ENCODE measurements at regions of chr1 and their contacts with region 1.

Region 1: GRCh38 chr1:46223472-46223943 is 20.4 kb downstream of the LURAP1 start:
- DNase-seq: peak in 1 of 2 experiments; percentile 63
- H3K4me3 ChIP-seq: peak overlapping the region in 1 of 4 experiments; percentile 7; a peak in 1 of 8 replicates
- H3K27ac ChIP-seq: no peak overlapping the region
- H3K4me1 ChIP-seq: peaks cover 3 to 11% (median 7%) of the 10 kb centered on the region in 4 experiments; a peak in 6 of 7 replicates
- H3K27me3 ChIP-seq: no peaks in the 10 kb centered on the region
- CTCF ChIP-seq: peak; percentile 72 to 95 (median 76)
- EP300 ChIP-seq: no peak
- POLR2A ChIP-seq: no peak
- RAD21 ChIP-seq: peak; percentile 76 to 80

Region 2: DNA sequence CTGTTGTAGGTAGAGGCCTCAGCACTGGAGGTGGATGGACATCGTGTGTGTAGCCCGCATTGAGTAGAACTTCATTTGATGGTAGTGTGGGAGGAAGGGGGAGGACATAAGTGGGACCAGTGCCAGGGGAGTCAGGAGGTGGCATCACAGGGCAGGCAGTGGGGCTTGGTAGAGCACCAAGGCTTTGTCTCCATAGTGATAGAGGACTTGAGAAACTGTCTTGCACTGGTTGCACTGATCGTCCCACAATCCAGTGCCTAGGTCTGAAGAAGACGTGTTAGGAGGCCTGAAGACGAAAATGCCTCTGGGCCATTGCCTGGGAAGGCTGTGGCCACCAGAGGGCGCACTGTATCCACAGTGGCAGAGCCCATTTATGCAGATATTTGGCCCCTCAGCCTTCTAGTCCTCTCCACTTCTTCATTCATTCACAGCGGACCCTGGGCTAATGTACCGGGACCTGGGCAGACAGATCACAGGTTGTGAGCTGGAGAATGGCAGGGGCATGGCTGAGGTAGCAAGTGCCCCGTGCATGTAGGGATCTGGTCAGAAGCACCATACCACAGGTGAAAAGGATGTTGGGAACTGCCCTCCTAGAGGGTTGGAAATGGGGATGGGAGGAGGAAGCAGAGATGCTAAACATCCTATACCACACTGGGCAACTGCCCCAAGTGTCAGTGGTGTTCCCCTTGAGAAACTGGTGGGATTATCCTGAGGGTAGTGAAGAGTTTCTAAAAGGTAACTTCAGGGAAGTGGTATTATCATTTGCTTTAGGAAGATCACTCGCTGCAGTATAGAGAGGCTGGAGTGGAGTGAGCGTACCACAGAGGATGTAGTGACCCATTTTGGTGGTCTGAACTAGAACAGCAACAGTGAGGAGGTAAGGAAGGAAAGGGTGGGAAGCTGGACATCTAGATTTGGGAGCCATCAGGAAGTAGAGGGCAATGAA is 186.3 kb before region 1 on chr1:
- CTCF ChIA-PET with region 1: interaction called, 36 read pairs
- POLR2A ChIA-PET with region 1: no interaction called
- DNase-seq: peak; percentile 76 to 97
- H3K4me3 ChIP-seq: no peak overlapping the region
- H3K27ac ChIP-seq: no peak overlapping the region
- H3K4me1 ChIP-seq: no peaks in the 10 kb centered on the region
- H3K27me3 ChIP-seq: no peaks in the 10 kb centered on the region
- CTCF ChIP-seq: peak; percentile 95 to 99 (median 98)
- EP300 ChIP-seq: no peak
- POLR2A ChIP-seq: peak in 1 of 2 experiments; percentile 72
- RAD21 ChIP-seq: peak; percentile 99

Region 3: GRCh38 chr1:46173361-46173856 is 50.1 kb before region 1 on chr1:
- CTCF ChIA-PET with region 1: interaction called, 73 read pairs
- POLR2A ChIA-PET with region 1: no interaction called
- DNase-seq: no peak
- H3K4me3 ChIP-seq: no peak overlapping the region
- H3K27ac ChIP-seq: no peak overlapping the region
- H3K4me1 ChIP-seq: peaks cover 3 to 19% (median 12%) of the 10 kb centered on the region in 4 experiments
- H3K27me3 ChIP-seq: peaks cover 0 to 1% (median under 1%) of the 10 kb centered on the region in 4 experiments; a peak in 3 of 7 replicates
- CTCF ChIP-seq: peak in 1 of 3 experiments; percentile 14; a peak in 1 of 4 replicates
- EP300 ChIP-seq: no peak
- POLR2A ChIP-seq: no peak
- RAD21 ChIP-seq: peak in 1 of 2 experiments; percentile 23; a peak in 3 of 4 replicates

Region 4: DNA sequence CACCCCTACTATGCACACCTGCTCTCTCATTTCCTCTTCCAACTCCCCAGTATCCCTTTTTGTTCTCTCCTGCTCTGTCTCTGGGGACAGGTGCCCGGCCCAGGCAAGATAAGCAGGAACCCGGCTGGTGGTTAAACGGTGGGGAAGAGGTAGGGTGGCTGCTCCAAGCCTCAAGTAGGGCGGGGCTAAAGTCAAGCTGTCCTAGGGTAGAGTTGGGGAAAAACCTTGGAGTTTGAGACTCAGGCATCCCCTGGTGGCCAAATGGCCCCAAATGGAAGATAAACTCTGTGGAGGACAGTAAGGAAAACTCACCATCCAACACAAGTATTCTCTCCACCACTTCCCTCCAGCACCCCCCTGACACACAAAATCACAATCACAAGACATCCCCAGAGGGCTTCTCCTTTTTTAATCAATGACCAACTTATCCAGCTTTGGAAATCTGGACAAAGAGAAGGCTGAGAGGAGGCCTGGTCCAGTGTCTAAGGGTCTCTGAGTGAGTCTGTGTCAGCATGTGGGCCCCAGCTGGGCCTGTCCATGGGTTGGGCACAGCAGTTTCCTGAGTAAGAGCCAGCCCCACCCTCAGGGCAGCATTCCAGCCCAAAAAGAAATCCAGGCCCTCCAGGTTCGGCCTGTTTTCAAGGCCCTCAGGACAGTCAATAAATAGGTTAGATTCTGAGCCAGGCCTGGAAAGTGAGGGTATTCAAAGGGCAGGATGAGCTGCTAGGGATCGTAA is 35.0 kb before region 1 on chr1:
- CTCF ChIA-PET with region 1: interaction called, 73 read pairs
- POLR2A ChIA-PET with region 1: interaction called, 4 read pairs
- DNase-seq: no peak
- H3K4me3 ChIP-seq: no peak overlapping the region
- H3K27ac ChIP-seq: no peak overlapping the region
- H3K4me1 ChIP-seq: no peaks in the 10 kb centered on the region
- H3K27me3 ChIP-seq: no peaks in the 10 kb centered on the region
- CTCF ChIP-seq: peak; percentile 9 to 50 (median 18); a peak in 3 of 4 replicates
- EP300 ChIP-seq: no peak
- POLR2A ChIP-seq: no peak
- RAD21 ChIP-seq: peak in 1 of 2 experiments; percentile 34; a peak in 2 of 4 replicates

Region 5: DNA sequence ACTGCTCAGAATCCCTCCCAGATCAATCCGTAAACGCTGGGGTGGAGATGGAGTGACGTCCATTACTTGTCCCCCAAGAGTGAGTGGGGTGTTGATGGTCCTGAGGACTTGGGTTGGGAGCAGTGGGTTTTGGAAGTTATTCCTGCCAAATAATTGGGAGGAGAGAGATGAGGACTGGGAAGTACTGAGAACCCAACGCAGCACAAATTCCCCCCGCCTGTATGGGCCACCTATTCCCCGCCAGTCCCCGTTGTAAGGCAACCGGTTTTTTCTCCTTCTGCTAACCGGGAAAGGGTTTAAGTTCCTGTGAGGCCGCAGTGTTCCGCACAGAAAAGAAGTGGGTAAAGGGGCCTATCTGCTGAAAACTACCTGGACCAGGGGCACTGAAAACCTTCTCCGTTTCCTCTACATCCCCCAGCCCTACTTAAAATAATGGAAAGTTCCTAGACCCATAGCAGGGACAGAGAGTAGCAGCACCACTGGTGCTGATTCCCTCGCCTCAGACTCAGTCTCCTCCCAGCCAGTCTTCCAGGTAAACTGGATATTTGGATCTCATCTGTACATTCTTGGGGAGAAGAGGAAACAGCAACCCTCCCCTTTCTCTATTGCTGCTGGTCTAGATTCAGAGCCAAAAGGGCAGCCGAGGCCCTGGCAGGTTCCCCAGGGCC is 19.6 kb before region 1 on chr1:
- CTCF ChIA-PET with region 1: interaction called, 25 read pairs
- POLR2A ChIA-PET with region 1: interaction called, 6 read pairs
- DNase-seq: no peak
- H3K4me3 ChIP-seq: peak overlapping the region; percentile 76 to 94 (median 84)
- H3K27ac ChIP-seq: no peak overlapping the region
- H3K4me1 ChIP-seq: peaks cover 0 to 3% (median 1%) of the 10 kb centered on the region in 4 experiments; a peak in 4 of 7 replicates
- H3K27me3 ChIP-seq: no peaks in the 10 kb centered on the region
- CTCF ChIP-seq: no peak
- EP300 ChIP-seq: no peak
- POLR2A ChIP-seq: no peak
- RAD21 ChIP-seq: no peak

Region 6: GRCh38 chr1:46236882-46237281 is 13.4 kb after region 1 on chr1:
- CTCF ChIA-PET with region 1: interaction called, 43 read pairs
- POLR2A ChIA-PET with region 1: interaction called, 5 read pairs
- DNase-seq: no peak
- H3K4me3 ChIP-seq: no peak overlapping the region
- H3K27ac ChIP-seq: no peak overlapping the region
- H3K4me1 ChIP-seq: no peaks in the 10 kb centered on the region
- H3K27me3 ChIP-seq: no peaks in the 10 kb centered on the region
- CTCF ChIP-seq: no peak
- EP300 ChIP-seq: no peak
- POLR2A ChIP-seq: no peak
- RAD21 ChIP-seq: no peak

Region 7: GRCh38 chr1:46303038-46303871 is 79.7 kb after region 1 on chr1 and contains the starts of genes LRRC41 and UQCRH:
- CTCF ChIA-PET with region 1: no interaction called
- POLR2A ChIA-PET with region 1: no interaction called
- DNase-seq: peak; percentile 93 to 97
- H3K4me3 ChIP-seq: peak within 1 kb of the TSS; percentile 84 to 97 (median 90)
- H3K27ac ChIP-seq: peak within 1 kb of the TSS; percentile 92
- H3K4me1 ChIP-seq: peaks cover 5 to 17% (median 14%) of the 10 kb centered on the region in 4 experiments
- H3K27me3 ChIP-seq: no peaks in the 10 kb centered on the region
- CTCF ChIP-seq: peak in 2 of 3 experiments; percentile 3 to 9; a peak in 2 of 4 replicates
- EP300 ChIP-seq: peak in 1 of 2 experiments; percentile 99; a peak in 2 of 3 replicates
- POLR2A ChIP-seq: peak; percentile 62 to 94
- RAD21 ChIP-seq: no peak
- total RNA-seq, gene LRRC41: 36.8 and 37.2 TPM in 2 replicates
- total RNA-seq, gene UQCRH: 621 and 626 TPM in 2 replicates

Measured in H1 (cell line).